Activated T-helper 1 cell treated with anti-CD3 and anti-CD28 coated beads, Interleukin-12 subunit alpha, Interleukin-12 subunit beta, Interleukin-2, Interleukin-4 antibody, amounts not matched to agents 30 ng/mL and 10 ng/mL and 1 ng/mL, durations not matched to agents 14 hours and 24 hours and 36 hours (primary cell): ENCODE measurements at regions of chr6 and their contacts with region 1.

Region 1: DNA sequence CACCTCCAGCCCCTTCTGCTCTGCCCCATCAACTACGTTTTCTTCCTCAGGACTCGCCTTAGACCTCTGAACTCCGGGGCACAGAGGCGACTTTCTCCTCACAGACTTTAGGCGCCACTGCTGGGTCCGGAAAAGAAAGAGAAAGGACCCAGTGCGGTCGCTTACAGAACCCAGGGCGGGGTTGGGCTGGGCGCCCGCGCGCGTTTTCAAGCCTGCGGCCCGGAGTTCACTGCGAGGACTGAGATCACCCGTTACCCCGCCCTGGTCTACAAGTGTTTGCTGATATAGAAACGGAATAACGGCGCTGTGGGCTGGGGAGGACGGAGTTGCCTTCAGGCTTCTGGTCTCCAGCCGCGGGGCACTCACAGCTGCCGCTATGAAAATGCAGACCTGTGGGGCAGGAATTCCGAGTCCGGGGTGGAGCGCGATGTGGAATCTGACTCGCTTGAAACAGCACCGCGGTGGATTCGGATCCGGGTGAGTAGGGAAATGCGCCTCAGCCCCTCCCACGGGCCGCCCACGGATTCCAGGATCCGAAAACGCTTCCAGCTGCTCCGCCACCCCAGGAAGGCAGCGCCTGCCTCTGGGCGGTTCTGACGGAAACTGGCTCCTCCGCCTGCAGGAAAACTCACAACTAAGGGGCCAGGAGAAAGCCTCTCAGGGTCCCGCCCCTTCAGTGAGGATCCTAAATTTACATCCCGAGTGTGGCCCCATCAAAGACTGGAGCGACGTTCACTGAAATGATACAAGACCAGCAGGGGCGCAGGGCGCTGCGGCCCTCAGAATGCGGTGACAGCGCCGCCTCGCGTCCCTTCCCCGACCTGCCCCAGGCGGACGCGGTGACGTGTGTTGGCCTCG is 29.4 kb downstream of the HLA-F start:
- DNase-seq: peak; percentile 79
- H3K4me3 Mint-ChIP-seq: peak overlapping the region; percentile 93
- H3K27ac Mint-ChIP-seq: peak overlapping the region; percentile 91
- H3K4me1 Mint-ChIP-seq: peaks cover 65% of the 10 kb centered on the region
- H3K27me3 Mint-ChIP-seq: no peaks in the 10 kb centered on the region

Region 2: DNA sequence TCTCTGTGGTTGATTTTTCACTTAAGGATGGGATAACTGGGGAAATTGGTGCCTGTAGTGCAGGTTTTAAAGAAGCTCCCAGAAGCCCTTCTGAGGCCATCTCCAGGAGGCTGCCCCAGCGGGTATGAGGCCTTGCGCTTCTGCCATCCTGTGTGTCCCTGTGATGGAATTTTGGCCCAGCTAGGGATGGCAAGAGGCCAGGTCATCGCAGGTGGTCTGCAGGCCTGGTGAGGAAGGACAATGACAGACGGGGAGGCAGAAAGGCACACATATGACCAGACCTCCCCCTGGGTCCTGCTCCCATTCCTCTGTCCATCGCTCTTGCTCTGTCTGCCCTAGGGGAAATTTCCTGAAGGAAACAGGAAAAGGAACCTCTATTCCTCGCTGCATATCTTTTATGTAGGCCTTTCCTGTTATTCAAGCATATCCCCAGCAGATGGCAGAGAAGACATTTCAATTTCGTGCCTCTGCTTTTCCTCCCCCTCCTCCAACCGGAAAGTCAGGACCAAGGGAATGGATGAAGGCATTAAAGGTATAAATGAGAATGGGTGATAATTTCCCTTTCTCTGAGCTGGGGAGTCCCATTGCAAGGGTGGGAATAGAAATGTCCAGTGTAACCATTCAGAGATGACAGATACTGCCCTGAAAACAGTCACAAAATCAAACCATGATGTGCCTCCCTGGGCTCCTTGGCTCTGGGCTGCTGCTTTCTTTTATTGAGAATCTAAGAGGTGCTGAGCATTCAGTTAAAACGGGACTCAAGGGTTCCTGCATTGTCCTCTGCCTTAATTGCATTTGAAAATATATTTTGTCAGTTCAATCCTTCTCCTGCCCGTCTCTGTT is 47.1 kb before region 1 on chr6:
- intact Hi-C with region 1: loop called (anchors 1 kb)
- DNase-seq: no peak
- H3K4me3 Mint-ChIP-seq: no peak overlapping the region
- H3K27ac Mint-ChIP-seq: no peak overlapping the region
- H3K4me1 Mint-ChIP-seq: peaks cover 60% of the 10 kb centered on the region
- H3K27me3 Mint-ChIP-seq: peaks cover 30% of the 10 kb centered on the region

Region 3: DNA sequence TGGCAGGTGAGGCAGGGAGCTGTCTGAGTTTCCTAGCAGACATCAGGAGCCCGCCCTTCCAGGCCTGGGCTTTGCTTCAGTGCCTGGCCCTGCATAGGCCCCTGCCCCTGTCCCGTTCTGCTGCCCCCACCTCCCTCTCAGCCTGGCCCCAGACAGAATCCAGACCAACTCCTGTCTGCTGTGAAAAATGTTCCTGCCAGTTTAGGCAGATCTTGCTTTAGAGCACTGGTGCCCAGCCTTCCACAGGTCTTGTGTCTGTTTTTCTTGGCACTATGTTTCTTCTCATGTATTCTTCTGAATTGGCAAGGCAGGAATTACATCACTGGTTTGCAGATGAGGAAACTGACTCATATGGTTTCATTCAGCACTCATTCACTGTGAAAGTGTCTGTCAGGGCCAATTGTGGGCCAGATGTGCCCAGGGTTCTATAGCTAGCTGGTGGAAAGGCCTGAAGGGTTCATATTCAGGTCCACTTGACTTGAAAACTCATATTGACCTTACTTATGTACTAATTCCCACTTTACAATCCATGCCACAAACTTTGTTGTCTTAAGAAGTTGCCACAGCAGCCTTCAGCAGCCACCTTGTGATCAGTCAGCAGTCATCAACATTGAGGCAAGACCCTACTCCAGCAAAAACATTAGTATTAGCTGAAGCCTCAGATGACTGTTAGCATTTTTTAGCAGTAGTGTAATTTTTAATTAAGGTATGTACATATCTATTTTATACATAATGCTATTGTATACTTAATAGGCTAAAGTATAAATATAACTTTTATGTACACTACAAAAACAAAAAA is 11.0 kb after region 1 on chr6:
- intact Hi-C with region 1: loop called (anchors 1 kb)
- DNase-seq: no peak
- H3K4me3 Mint-ChIP-seq: peak overlapping the region; percentile 38
- H3K27ac Mint-ChIP-seq: no peak overlapping the region
- H3K4me1 Mint-ChIP-seq: peaks cover 51% of the 10 kb centered on the region
- H3K27me3 Mint-ChIP-seq: peaks cover 2% of the 10 kb centered on the region

Region 4: DNA sequence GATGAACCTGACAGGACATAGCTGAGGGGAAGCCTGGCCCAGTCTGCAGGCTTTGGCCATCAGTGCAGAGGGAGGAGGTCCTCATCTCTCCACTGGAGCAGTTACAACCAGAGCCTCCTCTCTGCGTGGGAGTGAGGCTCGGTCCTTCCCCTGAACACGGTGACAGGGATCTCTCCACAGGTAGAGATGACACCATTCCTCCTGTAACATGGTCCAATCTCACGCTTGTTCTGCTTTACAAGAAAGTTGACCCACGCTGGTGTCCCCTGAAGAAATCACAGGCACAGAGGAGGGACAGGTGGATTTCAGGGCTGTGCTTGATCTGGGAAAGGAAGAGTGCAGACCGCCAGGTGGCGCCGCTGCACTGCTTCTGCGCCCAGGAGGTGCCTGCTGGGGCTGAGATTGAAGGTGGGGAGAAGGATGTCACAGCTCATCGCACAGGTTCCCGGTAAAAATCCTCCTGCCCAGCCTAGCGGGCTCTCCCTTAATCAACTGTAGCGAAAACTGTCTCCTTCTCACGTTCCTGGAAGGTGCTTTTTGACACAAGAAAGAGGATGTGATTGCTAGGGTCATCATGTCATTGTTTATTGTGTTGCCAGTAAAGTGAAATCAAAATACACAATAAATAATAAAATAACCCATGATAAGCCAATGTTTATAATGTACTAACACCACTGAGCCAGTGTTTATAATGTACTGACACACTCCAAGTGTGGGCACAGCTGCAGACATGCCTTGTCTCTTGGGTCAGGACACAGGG is 95.4 kb after region 1 on chr6:
- intact Hi-C with region 1: loop called (anchors 2 kb)
- DNase-seq: peak; percentile 70
- H3K4me3 Mint-ChIP-seq: no peak overlapping the region
- H3K27ac Mint-ChIP-seq: peak overlapping the region; percentile 50
- H3K4me1 Mint-ChIP-seq: peaks cover 37% of the 10 kb centered on the region
- H3K27me3 Mint-ChIP-seq: peaks cover 34% of the 10 kb centered on the region

Region 5: DNA sequence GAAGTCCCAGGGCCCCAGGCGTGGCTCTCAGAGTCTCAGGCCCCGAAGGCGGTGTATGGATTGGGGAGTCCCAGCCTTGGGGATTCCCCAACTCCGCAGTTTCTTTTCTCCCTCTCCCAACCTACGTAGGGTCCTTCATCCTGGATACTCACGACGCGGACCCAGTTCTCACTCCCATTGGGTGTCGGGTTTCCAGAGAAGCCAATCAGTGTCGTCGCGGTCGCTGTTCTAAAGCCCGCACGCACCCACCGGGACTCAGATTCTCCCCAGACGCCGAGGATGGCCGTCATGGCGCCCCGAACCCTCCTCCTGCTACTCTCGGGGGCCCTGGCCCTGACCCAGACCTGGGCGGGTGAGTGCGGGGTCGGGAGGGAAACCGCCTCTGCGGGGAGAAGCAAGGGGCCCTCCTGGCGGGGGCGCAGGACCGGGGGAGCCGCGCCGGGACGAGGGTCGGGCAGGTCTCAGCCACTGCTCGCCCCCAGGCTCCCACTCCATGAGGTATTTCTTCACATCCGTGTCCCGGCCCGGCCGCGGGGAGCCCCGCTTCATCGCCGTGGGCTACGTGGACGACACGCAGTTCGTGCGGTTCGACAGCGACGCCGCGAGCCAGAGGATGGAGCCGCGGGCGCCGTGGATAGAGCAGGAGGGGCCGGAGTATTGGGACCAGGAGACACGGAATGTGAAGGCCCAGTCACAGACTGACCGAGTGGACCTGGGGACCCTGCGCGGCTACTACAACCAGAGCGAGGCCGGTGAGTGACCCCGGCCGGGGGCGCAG is 189.8 kb after region 1 on chr6 and contains the start of gene HLA-A:
- intact Hi-C with region 1: loop called (anchors 5 kb)
- DNase-seq: peak; percentile 88
- H3K4me3 Mint-ChIP-seq: peak within 1 kb of the TSS; percentile 95
- H3K27ac Mint-ChIP-seq: peak within 1 kb of the TSS; percentile 98
- H3K4me1 Mint-ChIP-seq: peaks cover 57% of the 10 kb centered on the region
- H3K27me3 Mint-ChIP-seq: no peaks in the 10 kb centered on the region
- total RNA-seq, gene HLA-A: 1,482 and 1,503 TPM in 2 replicates